Dorsolateral prefrontal cortex (tissue), 120 donors: ENCODE measurements at regions of chrX and their contacts with region 1.

Region 1: GRCh38 chrX:41180194-41180908 is 95.1 kb downstream of the USP9X start:
- DNase-seq: peak in 7 of 10 donors; percentile 40 to 71 (median 46)
- H3K4me3 ChIP-seq: no peak overlapping the region
- H3K27ac ChIP-seq: peak overlapping the region in 1 of 59 donors; percentile 6
- H3K27me3 ChIP-seq: no peaks in the 10 kb centered on the region
- CTCF ChIP-seq: peak; percentile 29 to 86 (median 74)

Region 2: DNA sequence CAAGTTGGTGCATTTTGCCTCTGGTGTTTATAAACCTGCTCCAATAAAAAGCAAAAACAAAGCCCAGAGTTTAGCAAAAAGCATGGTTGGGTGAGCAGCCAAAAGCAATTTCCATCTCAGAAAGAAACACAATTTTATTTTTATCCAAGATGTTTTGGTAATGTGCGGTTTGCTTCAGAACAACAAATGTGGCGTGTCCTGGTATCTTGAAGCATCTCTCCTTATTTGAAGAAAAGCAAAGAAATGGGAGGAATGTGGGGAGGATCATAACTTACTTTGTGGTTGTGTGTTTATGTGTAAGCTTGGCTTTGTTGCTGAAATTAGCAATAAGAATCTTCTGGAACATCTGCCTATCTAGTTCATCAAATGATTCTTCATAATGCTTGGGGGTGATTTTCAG is 65.3 kb after region 1 on chrX:
- intact Hi-C with region 1: loop called (anchors 5 to 10 kb)
- DNase-seq: no peak
- H3K4me3 ChIP-seq: no peak overlapping the region
- H3K27ac ChIP-seq: peak overlapping the region in 1 of 59 donors; percentile 40
- H3K27me3 ChIP-seq: peaks cover 0 to 36% (median 4%) of the 10 kb centered on the region in 45 donors
- CTCF ChIP-seq: no peak

Region 3: GRCh38 chrX:41250867-41251266 is 70.5 kb after region 1 on chrX:
- intact Hi-C with region 1: loop called (anchors 5 to 10 kb)
- DNase-seq: no peak
- H3K4me3 ChIP-seq: no peak overlapping the region
- H3K27ac ChIP-seq: no peak overlapping the region
- H3K27me3 ChIP-seq: peaks cover 0 to 61% (median 13%) of the 10 kb centered on the region in 45 donors
- CTCF ChIP-seq: no peak